HCT116 (cell line): ENCODE measurements at regions of chr5 and their contacts with region 1.

Region 1: GRCh38 chr5:170896779-170897178 is 35.0 kb downstream of the RANBP17 start:
- DNase-seq: no peak
- ATAC-seq: peak; percentile 75
- H3K4me3 ChIP-seq: no peak overlapping the region
- H3K27ac ChIP-seq: no peak overlapping the region
- H3K4me1 ChIP-seq: no peaks in the 10 kb centered on the region
- H3K27me3 ChIP-seq: no peaks in the 10 kb centered on the region
- CTCF ChIP-seq: peak in 2 of 3 experiments; percentile 46 to 53; a peak in 4 of 6 replicates
- POLR2A ChIP-seq: no peak
- RAD21 ChIP-seq: peak; percentile 30; the same call in 1 of the 2 replicates

Region 2: GRCh38 chr5:170747851-170748250 is 148.9 kb before region 1 on chr5:
- CTCF ChIA-PET with region 1: no interaction called
- POLR2A ChIA-PET with region 1: no interaction called
- RAD21 ChIA-PET with region 1: no interaction called
- intact Hi-C with region 1: loop called (anchors 10 kb)
- DNase-seq: peak; percentile 16
- ATAC-seq: peak; percentile 35; the same call in 1 of the 2 replicates
- H3K4me3 ChIP-seq: no peak overlapping the region
- H3K27ac ChIP-seq: no peak overlapping the region
- H3K4me1 ChIP-seq: peaks cover 0 to 10% of the 10 kb centered on the region in 2 experiments; a peak in 1 of 4 replicates
- H3K27me3 ChIP-seq: peaks cover 13% of the 10 kb centered on the region; the same call in 1 of the 2 replicates
- CTCF ChIP-seq: peak; percentile 40 to 68 (median 56); a peak in 5 of 6 replicates
- POLR2A ChIP-seq: no peak
- RAD21 ChIP-seq: peak; percentile 37; the same call in 1 of the 2 replicates

Region 3: GRCh38 chr5:171055875-171056454 is 159.2 kb after region 1 on chr5:
- CTCF ChIA-PET with region 1: no interaction called
- POLR2A ChIA-PET with region 1: no interaction called
- RAD21 ChIA-PET with region 1: no interaction called
- intact Hi-C with region 1: no loop called
- DNase-seq: no peak
- ATAC-seq: no peak
- H3K4me3 ChIP-seq: no peak overlapping the region
- H3K27ac ChIP-seq: no peak overlapping the region
- H3K4me1 ChIP-seq: no peaks in the 10 kb centered on the region
- H3K27me3 ChIP-seq: no peaks in the 10 kb centered on the region
- CTCF ChIP-seq: no peak
- POLR2A ChIP-seq: no peak
- RAD21 ChIP-seq: no peak